ENCODE measurements at regions of chr9 and their contacts with region 1.

Region 1: DNA sequence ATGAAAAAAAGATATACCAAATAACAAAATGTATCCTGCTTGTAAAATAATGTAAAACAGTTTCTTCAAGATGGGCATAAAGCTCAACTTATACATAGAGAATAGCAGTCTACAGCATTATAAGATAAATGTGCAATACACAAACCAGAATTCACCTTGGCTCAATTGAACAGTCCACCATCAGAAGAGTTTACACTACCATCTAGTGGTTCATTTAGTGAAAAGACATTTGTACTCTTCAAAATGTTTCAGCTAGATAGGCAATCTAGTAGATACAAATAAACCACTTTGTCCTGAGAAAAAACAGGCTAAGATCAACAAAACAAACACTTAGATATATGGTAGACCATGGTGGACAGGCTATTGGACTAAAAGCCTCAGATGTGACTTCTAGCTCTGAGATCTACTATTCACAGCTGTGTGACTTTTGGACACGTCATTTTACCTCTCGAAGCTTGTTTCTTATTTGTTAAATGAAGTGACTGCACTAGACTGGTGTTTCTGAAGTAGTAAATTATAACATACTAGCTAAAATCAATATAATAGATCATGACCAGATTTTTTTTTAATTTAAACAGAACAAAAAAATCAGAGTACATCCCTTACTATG is 22.1 kb upstream of the TPD52L3 start:
- DNase-seq: no peak
- H3K4me3 ChIP-seq: no peak overlapping the region
- H3K27ac ChIP-seq: no peak overlapping the region
- H3K4me1 ChIP-seq: no peaks in the 10 kb centered on the region
- H3K27me3 ChIP-seq: peaks cover 12% of the 10 kb centered on the region
- CTCF ChIP-seq: peak; percentile 75

Region 2: DNA sequence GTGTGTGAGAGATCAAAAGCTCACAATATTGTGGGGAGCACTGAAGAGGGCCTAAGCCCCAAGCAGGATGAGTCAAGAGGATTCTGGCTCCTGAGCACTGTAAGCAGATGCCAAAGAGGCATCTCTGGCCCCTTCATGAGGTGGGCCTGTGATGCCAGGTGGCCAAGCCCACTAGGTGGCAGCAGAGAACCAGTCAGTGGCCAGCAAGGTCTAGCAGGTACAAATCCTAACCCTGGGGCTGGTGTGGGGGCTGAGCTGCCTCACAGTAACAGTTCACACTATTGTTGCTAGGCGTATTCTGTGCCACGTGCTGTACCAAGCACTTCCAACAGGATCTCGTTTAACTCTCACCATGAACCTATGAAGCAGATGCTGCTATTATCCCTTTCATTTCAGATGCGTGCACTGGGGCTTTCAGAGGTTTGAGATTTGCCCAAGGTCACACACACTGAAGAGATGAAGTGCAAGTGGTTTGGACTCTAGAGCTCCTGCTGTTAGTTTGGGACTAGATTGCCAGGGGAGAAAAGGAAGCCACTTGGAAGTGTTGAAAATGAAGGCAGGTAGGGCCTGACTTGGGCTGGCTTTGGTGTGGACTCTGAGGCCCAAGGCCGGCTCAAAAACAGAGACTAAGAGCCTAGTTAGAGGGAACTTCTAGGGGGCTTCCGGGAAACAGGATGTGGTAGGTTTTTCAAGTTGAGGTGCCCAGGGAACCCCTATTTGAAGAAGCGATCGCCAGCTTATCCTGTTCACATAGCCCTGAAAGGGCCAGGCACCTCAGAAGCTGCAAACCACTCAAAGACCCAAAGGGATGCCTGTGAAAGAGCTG is 419.7 kb before region 1 on chr9:
- intact Hi-C with region 1: loop called (anchors 10 kb)
- DNase-seq: peak; percentile 62
- H3K4me3 ChIP-seq: no peak overlapping the region
- H3K27ac ChIP-seq: no peak overlapping the region
- H3K4me1 ChIP-seq: no peaks in the 10 kb centered on the region
- H3K27me3 ChIP-seq: no peaks in the 10 kb centered on the region
- CTCF ChIP-seq: peak; percentile 91

Region 3: DNA sequence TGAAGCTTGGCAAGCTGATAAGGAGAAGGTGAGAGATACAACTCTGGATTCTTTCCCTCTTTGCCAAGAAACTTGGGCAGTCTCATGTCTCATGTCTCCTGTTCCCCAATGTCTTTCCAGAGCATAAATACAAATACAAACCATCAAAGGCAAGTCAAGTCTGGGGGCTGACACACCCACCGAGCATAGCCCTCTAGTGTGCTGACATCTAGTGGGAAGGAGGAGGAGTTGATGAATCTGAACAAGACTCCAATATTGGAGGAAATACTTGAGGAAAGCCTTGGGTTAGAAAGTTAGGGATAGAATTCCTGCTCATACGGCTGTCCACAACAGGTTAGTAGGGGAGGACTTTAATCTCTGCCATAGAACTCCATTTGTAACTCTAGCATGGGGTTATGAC is 406.8 kb before region 1 on chr9:
- intact Hi-C with region 1: no loop called
- DNase-seq: no peak
- H3K4me3 ChIP-seq: no peak overlapping the region
- H3K27ac ChIP-seq: no peak overlapping the region
- H3K4me1 ChIP-seq: peaks cover 7% of the 10 kb centered on the region
- H3K27me3 ChIP-seq: no peaks in the 10 kb centered on the region
- CTCF ChIP-seq: no peak

Region 4: DNA sequence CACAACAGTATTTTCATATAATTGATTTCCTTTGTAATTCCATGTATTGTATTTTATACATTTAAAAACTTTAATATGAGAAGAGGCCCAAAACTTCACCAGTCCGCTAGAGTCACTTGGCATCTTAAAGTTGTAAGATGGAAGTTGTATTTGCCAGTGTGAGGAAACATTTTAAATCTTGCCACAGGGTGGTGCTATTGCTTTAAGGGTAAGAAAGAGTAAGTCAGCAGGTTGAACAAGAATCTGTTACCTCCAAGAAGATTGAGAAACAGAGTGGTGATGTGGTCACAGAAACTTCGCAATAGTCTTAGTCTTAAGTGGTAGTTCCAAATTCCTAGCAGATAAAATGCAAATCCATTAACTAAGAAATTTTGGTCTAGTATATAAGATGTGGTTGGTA is 250.8 kb before region 1 on chr9:
- intact Hi-C with region 1: loop called (anchors 2 kb)
- DNase-seq: no peak
- H3K4me3 ChIP-seq: no peak overlapping the region
- H3K27ac ChIP-seq: no peak overlapping the region
- H3K4me1 ChIP-seq: no peaks in the 10 kb centered on the region
- H3K27me3 ChIP-seq: no peaks in the 10 kb centered on the region
- CTCF ChIP-seq: peak; percentile 63

Region 5: GRCh38 chr9:6197330-6197729 is 108.7 kb before region 1 on chr9:
- intact Hi-C with region 1: loop called (anchors 2 kb)
- DNase-seq: no peak
- H3K4me3 ChIP-seq: no peak overlapping the region
- H3K27ac ChIP-seq: peak overlapping the region; percentile 9
- H3K4me1 ChIP-seq: peaks cover 16% of the 10 kb centered on the region
- H3K27me3 ChIP-seq: no peaks in the 10 kb centered on the region
- CTCF ChIP-seq: peak; percentile 64

Region 6: DNA sequence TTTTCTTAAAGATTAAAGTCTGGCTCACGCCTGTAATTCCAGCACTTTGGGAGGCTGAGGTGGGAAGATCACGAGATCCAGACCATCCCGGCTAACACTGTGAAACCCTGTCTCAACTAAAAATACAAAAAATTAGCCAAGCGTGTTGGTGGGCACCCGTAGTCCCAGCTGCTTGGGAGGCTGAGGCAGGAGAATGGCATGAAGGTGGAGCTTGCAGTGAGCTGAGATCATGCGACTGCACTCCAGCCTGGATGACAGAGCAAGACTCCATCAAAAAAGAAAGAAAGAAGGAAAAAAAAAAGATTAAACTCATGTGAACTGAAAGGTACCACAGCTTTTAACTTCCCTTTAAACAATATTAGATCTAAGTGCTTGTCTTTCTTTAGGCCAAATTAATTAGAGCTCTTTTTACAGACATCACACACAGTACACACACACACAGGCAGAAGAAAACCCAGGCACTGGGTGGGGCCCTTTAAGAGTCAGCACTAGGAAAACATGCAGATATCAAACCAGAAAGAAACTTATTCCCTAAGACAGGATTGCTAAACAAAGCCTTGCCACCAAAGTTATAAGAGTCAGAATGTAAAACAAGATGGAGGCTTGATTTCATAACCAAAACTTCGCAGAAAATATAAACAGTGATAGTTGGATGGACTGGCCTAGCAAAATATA is 77.6 kb after region 1 on chr9:
- intact Hi-C with region 1: no loop called
- DNase-seq: no peak
- H3K4me3 ChIP-seq: no peak overlapping the region
- H3K27ac ChIP-seq: no peak overlapping the region
- H3K4me1 ChIP-seq: no peaks in the 10 kb centered on the region
- H3K27me3 ChIP-seq: no peaks in the 10 kb centered on the region
- CTCF ChIP-seq: no peak